PC-9 (cell line): ENCODE measurements at regions of chr14 and their contacts with region 1.

Region 1: GRCh38 chr14:64764641-64765520 is 60.7 kb downstream of the PLEKHG3 start:
- DNase-seq: peak in 1 of 2 experiments; percentile 72
- H3K4me3 ChIP-seq: peak overlapping the region; percentile 27; the same call in 1 of the 2 replicates
- H3K27ac ChIP-seq: no peak overlapping the region
- H3K4me1 ChIP-seq: peaks cover 39% of the 10 kb centered on the region
- H3K27me3 ChIP-seq: no peaks in the 10 kb centered on the region
- CTCF ChIP-seq: peak; percentile 92

Region 2: DNA sequence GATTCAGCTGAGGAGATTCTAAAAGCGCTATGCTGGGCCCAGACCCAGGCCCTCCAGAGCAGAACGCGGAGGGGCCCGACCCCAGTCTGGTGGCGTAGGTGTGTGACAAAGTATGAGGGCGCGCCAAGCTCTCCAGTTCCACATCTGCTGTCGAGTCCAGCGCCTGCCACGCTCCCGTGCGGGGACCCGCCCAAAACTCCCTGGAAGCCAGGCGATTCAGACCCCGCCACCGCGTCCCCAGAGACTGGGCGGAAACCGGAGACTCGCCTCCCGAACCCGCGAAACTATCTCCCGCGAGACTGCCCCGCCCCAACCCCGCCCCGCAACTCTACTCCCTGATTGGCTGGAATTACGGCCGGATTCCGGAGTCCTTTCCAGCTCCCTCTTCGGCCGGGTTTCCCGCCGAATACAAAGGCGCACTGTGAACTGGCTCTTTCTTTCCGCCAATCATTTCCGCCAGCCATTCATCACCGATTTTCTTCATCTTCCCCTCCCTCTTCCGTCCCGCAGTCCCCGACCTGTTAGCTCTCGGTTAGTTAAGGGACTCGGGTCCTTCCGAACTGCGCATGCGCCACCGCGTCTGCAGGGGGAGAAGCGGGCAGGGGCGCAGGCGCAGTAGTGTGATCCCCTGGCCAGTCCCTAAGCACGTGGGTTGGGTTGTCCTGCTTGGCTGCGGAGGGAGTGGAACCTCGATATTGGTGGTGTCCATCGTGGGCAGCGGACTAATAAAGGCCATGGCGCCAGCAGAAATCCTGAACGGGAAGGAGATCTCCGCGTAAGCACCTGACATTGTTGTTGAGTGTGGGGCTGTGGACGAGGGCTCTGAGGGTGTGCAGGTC is 377.0 kb before region 1 on chr14 and contains the start of gene MTHFD1:
- CTCF ChIA-PET with region 1: no interaction called
- POLR2A ChIA-PET with region 1: interaction called, 10 read pairs
- intact Hi-C with region 1: no loop called
- DNase-seq: peak; percentile 98 to 99
- H3K4me3 ChIP-seq: peak within 1 kb of the TSS; percentile 73
- H3K27ac ChIP-seq: peak within 1 kb of the TSS; percentile 72
- H3K4me1 ChIP-seq: peaks cover 23% of the 10 kb centered on the region
- H3K27me3 ChIP-seq: no peaks in the 10 kb centered on the region
- CTCF ChIP-seq: no peak
- total RNA-seq, gene MTHFD1: 130 and 161 TPM in 2 replicates

Region 3: DNA sequence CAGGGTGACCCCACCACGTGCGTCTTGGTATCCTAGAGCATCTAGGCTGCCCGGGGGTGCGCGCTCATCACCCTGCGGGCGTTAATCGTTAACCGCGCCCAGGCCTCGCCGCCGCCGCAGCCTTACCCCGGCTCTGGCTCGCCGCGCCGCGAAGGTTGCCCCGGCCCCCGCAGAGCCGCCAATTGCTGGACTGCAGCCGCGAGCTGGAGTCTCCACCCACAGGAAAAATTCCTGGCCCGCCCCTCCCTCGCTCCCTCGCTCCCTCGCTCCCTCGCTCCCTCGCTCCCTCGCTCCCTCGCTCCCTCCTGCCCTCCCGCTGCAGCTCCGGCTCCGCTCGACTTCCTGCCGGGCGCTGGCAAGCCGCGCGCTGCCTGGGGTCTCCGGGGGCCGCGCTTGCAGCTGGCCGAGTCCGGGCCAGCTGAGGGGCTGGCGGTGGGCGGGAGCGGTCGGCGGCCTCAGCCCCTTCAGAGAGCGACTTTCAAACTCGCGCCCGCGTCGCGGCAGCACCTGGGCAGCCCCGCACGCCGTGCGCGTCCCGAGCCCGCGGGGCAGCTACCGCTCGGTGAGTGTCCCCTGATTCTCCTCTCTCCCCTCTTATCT is 60.6 kb before region 1 on chr14 and contains the start of gene PLEKHG3:
- CTCF ChIA-PET with region 1: interaction called, 6 read pairs
- POLR2A ChIA-PET with region 1: interaction called, 3 read pairs
- intact Hi-C with region 1: loop called (anchors 1 kb)
- DNase-seq: peak; percentile 70 to 88
- H3K4me3 ChIP-seq: peak within 1 kb of the TSS; percentile 97
- H3K27ac ChIP-seq: peak within 1 kb of the TSS; percentile 49
- H3K4me1 ChIP-seq: peaks cover 69% of the 10 kb centered on the region
- H3K27me3 ChIP-seq: no peaks in the 10 kb centered on the region
- CTCF ChIP-seq: no peak
- total RNA-seq, gene PLEKHG3: 59.3 and 61.7 TPM in 2 replicates

Region 4: GRCh38 chr14:64745511-64746091 is 19.3 kb before region 1 on chr14:
- CTCF ChIA-PET with region 1: no interaction called
- POLR2A ChIA-PET with region 1: no interaction called
- intact Hi-C with region 1: no loop called
- DNase-seq: no peak
- H3K4me3 ChIP-seq: no peak overlapping the region
- H3K27ac ChIP-seq: no peak overlapping the region
- H3K4me1 ChIP-seq: no peaks in the 10 kb centered on the region
- H3K27me3 ChIP-seq: no peaks in the 10 kb centered on the region
- CTCF ChIP-seq: no peak

Region 5: DNA sequence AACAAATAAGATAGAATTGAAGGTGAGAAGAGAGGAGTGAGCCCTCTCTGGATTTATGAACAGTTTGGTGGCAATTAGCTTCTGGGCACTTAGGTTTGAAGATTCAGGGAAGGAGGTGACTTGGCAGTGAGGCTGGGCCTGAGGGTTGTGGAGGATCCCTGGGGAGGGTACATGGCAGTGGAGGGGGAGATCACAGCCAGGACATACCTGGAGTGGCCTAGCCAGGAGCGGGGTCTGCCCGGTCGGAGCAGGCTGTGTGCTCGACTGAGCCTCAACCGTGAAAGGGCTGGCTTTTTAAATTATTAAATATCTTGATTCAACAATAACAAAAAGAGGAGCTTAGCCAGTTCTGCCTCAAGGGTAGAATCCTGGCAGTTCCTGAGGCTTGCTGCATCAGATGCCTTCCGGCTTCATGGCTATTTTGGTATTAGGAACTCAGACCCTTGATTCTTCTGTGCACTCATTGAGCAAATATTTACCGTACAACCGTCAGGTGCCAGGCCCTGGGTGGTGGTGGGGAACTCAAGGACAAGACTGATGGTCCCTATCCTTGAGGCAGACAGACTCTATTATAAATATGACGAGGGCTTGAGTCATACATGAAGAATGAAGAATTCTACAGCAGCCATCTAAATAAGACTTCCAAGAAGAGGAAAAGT is 41.5 kb after region 1 on chr14:
- CTCF ChIA-PET with region 1: no interaction called
- POLR2A ChIA-PET with region 1: no interaction called
- intact Hi-C with region 1: loop called (anchors 2 kb)
- DNase-seq: peak; percentile 85 to 98
- H3K4me3 ChIP-seq: peak overlapping the region; percentile 11; the same call in 1 of the 2 replicates
- H3K27ac ChIP-seq: peak overlapping the region; percentile 84
- H3K4me1 ChIP-seq: peaks cover 41% of the 10 kb centered on the region
- H3K27me3 ChIP-seq: no peaks in the 10 kb centered on the region
- CTCF ChIP-seq: no peak